Activated CD8-positive, alpha-beta T cell treated with anti-CD3 and anti-CD28 coated beads for 36 hours (primary cell): ENCODE measurements at regions of chr13 and their contacts with region 1.

Region 1: GRCh38 chr13:41054212-41054877 is 7.0 kb upstream of the WBP4 start:
- DNase-seq: peak; percentile 60
- ATAC-seq: peak; percentile 54
- H3K4me3 Mint-ChIP-seq: peak overlapping the region; percentile 6
- H3K27ac Mint-ChIP-seq: no peak overlapping the region
- H3K4me1 Mint-ChIP-seq: peaks cover 57% of the 10 kb centered on the region
- H3K27me3 Mint-ChIP-seq: no peaks in the 10 kb centered on the region
- CTCF ChIP-seq: peak; percentile 76

Region 2: DNA sequence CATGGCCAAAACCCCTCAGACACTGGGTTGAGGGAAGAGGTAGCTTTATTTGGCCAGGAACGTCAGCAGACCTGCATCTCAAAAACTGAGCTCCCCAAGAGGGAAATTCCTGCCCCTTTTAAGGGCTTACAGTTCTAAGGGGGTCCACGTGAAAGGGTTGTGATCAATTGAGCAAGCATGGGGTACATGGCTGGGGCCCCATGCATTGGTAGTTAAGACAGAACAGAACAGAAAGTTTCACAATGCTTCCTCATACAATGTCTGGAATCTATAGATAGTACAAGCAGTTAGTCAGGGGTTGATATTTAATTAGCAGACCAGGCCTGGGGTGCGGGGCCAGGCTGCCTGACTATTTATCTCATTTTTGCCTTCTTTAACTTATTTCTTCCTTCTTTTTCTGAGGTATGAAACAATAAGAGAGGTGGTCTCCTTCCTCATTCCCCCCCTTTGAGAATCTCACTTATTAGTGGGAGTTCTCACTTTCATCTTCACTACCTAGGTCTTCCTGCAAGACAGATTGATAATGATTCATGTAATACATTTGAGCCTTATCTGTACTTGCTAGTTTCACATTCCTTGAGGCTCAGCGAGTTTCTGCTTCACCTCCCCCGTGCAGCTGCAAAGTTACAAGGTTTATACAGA is 180.1 kb before region 1 on chr13:
- CTCF ChIA-PET with region 1: no interaction called
- POLR2A ChIA-PET with region 1: no interaction called
- intact Hi-C with region 1: no loop called
- DNase-seq: no peak
- ATAC-seq: no peak
- H3K4me3 Mint-ChIP-seq: no peak overlapping the region
- H3K27ac Mint-ChIP-seq: no peak overlapping the region
- H3K4me1 Mint-ChIP-seq: no peaks in the 10 kb centered on the region
- H3K27me3 Mint-ChIP-seq: no peaks in the 10 kb centered on the region
- CTCF ChIP-seq: no peak

Region 3: DNA sequence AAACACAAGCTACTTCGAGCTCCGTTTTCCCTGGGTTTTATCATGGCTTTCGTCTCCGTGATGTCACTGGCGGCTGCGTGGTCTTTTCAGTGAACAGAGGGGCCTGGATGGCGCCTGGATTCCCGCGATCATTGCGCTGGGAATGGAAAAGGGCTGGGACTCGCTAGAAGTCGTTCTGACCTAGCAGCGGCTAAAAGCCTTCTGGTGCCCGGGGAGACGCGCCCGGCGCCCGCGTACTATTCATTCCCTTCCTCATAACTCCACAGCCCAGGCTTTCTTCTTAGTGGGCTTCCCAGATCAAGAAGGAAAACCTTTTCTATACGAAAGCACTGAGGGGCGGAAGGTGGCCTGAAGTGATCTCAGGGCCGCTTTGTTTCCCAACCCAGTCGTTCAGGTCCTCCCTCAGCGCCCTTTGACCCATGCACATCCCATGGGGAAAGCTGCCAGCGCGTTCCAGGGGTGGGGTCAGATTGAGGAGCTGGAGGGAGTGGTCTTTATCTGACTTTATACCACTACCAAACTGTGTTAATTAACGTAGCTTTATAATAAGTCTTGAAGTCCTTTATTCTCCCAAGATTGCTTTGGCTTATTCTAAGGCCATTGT is 131.8 kb before region 1 on chr13:
- CTCF ChIA-PET with region 1: interaction called, 11 read pairs
- POLR2A ChIA-PET with region 1: interaction called, 5 read pairs
- intact Hi-C with region 1: no loop called
- DNase-seq: no peak
- ATAC-seq: no peak
- H3K4me3 Mint-ChIP-seq: peak overlapping the region; percentile 52
- H3K27ac Mint-ChIP-seq: peak overlapping the region; percentile 77
- H3K4me1 Mint-ChIP-seq: peaks cover 17% of the 10 kb centered on the region
- H3K27me3 Mint-ChIP-seq: no peaks in the 10 kb centered on the region
- CTCF ChIP-seq: no peak

Region 4: GRCh38 chr13:40982772-40983171 is 71.6 kb before region 1 on chr13:
- CTCF ChIA-PET with region 1: interaction called, 4 read pairs
- POLR2A ChIA-PET with region 1: interaction called, 16 read pairs
- intact Hi-C with region 1: loop called (anchors 5 kb)
- DNase-seq: peak; percentile 76
- ATAC-seq: peak; percentile 73
- H3K4me3 Mint-ChIP-seq: peak overlapping the region; percentile 99
- H3K27ac Mint-ChIP-seq: peak overlapping the region; percentile 92
- H3K4me1 Mint-ChIP-seq: peaks cover 46% of the 10 kb centered on the region
- H3K27me3 Mint-ChIP-seq: no peaks in the 10 kb centered on the region
- CTCF ChIP-seq: no peak

Region 5: GRCh38 chr13:41019011-41019487 is 35.3 kb before region 1 on chr13 and contains the start of gene ELF1:
- CTCF ChIA-PET with region 1: interaction called, 31 read pairs
- POLR2A ChIA-PET with region 1: interaction called, 38 read pairs
- intact Hi-C with region 1: no loop called
- DNase-seq: peak; percentile 76
- ATAC-seq: peak; percentile 88
- H3K4me3 Mint-ChIP-seq: peak within 1 kb of the TSS; percentile 91
- H3K27ac Mint-ChIP-seq: peak within 1 kb of the TSS; percentile 98
- H3K4me1 Mint-ChIP-seq: peaks cover 24% of the 10 kb centered on the region
- H3K27me3 Mint-ChIP-seq: no peaks in the 10 kb centered on the region
- CTCF ChIP-seq: no peak
- total RNA-seq, gene ELF1: 85.2 to 88.2 TPM

Region 6: GRCh38 chr13:41039746-41040145 is 14.6 kb before region 1 on chr13:
- CTCF ChIA-PET with region 1: interaction called, 13 read pairs
- POLR2A ChIA-PET with region 1: no interaction called
- intact Hi-C with region 1: no loop called
- DNase-seq: no peak
- ATAC-seq: no peak
- H3K4me3 Mint-ChIP-seq: no peak overlapping the region
- H3K27ac Mint-ChIP-seq: no peak overlapping the region
- H3K4me1 Mint-ChIP-seq: peaks cover 21% of the 10 kb centered on the region
- H3K27me3 Mint-ChIP-seq: no peaks in the 10 kb centered on the region
- CTCF ChIP-seq: no peak

Region 7: GRCh38 chr13:41222259-41222852 is 168.0 kb after region 1 on chr13:
- CTCF ChIA-PET with region 1: interaction called, 15 read pairs
- POLR2A ChIA-PET with region 1: no interaction called
- intact Hi-C with region 1: no loop called
- DNase-seq: peak; percentile 76
- ATAC-seq: peak; percentile 100
- H3K4me3 Mint-ChIP-seq: no peak overlapping the region
- H3K27ac Mint-ChIP-seq: no peak overlapping the region
- H3K4me1 Mint-ChIP-seq: peaks cover 2% of the 10 kb centered on the region
- H3K27me3 Mint-ChIP-seq: no peaks in the 10 kb centered on the region
- CTCF ChIP-seq: peak; percentile 78